Calu3 (cell line): ENCODE measurements at regions of chr3 and their contacts with region 1.

Region 1: DNA sequence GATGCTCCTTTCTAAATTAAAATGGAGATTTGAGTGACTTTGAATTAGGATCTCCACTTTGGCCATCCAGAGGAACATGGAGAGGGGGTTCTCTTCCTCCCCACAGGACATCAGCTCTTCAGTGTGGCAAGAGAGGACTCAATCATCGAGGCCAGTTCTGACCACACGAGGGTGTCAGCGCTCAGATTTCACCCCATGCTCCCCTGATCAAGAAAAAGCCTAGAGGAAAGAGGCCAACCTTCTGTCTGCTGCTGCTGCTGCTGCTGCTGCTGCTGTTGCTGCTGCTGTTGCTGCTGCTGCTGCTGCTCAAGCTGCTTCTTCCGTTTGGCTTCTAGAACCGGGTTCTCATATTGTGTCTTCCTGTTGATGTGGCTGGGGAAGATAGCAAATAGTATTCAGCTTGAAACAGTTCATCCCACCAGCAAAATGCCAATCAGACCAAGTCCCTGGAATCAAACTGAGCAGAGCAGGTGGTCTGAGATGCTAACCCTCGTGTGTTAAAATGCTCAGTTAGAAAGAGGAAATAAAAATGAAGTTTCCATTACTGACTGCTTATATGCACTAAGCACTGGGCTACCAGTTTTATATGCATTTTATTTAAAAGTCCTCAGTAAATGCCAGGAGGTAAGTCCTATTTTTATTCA is 599.0 kb downstream of the MAGI1 start:
- DNase-seq: peak; percentile 59
- H3K4me3 Mint-ChIP-seq: no peak overlapping the region
- H3K27ac Mint-ChIP-seq: no peak overlapping the region
- H3K4me1 Mint-ChIP-seq: no peaks in the 10 kb centered on the region
- H3K27me3 Mint-ChIP-seq: no peaks in the 10 kb centered on the region
- CTCF ChIP-seq: peak; percentile 44

Region 2: DNA sequence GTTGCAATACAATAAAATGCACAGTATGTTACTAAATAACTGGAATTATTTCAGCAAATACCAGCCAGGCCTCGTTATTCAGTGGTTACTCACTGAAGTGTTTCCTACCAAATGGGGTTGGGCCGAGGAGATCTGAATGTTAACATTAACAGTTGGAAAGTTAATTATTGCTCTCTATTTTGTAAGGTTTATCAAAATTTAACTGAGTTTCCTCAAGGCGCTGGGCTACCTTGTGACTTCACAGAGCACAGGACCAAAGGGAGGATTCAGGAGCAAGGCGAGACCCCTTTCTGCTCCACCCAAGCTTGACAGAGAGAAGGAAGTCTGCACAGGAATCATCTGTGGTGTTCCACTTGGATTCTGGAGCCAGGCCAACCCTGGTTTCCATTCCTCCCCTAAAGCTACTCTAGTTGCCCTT is 773.6 kb before region 1 on chr3:
- CTCF ChIA-PET with region 1: no interaction called
- intact Hi-C with region 1: loop called (anchors 5 kb)
- DNase-seq: peak; percentile 67
- H3K4me3 Mint-ChIP-seq: no peak overlapping the region
- H3K27ac Mint-ChIP-seq: peak overlapping the region; percentile 92
- H3K4me1 Mint-ChIP-seq: peaks cover 63% of the 10 kb centered on the region
- H3K27me3 Mint-ChIP-seq: no peaks in the 10 kb centered on the region
- CTCF ChIP-seq: no peak

Region 3: DNA sequence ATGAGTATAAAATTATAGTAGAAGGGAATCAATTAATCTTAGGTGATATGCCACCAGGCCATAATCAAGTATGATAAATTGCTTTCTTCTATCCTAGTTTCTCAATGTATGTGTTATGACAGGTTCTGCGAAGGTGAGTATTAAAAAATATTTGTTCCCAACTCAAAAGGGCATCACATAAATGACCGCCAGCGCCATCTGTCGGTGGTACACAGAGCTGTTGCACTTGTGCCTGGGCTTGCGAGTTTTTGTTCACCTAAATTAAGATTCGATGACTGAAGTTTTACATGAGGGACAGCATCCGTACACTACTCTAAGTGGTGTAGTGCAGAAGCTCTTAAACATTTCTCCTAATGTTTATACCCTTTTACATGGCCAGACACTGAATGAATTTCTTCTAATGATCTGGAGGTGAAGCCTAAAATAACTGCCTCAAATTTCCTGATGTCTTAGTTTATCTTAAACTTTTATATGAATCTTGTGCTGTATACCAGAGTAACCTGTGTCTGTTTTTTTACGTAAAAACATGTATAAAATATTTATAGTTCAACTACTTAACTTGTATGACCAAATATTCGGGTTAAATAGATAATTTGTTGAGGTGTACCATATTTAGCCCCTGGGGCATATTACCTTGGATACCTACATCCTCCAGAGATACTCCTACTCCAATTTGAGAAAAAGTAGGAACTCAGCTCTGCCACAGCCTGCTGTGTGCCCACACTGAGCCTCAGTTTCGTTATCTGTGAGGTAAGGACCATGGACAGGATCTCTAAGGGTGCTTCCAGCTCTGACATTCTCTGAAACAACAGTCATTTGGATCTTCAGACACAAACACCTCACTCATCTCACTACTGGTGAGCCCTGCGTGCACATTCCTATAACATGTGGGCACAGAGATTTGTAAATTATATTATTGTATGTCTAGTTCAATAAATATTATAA is 233.4 kb after region 1 on chr3:
- CTCF ChIA-PET with region 1: interaction called, 10 read pairs
- intact Hi-C with region 1: loop called (anchors 2 kb)
- DNase-seq: peak; percentile 64
- H3K4me3 Mint-ChIP-seq: no peak overlapping the region
- H3K27ac Mint-ChIP-seq: no peak overlapping the region
- H3K4me1 Mint-ChIP-seq: peaks cover 15% of the 10 kb centered on the region
- H3K27me3 Mint-ChIP-seq: no peaks in the 10 kb centered on the region
- CTCF ChIP-seq: peak; percentile 63

Region 4: DNA sequence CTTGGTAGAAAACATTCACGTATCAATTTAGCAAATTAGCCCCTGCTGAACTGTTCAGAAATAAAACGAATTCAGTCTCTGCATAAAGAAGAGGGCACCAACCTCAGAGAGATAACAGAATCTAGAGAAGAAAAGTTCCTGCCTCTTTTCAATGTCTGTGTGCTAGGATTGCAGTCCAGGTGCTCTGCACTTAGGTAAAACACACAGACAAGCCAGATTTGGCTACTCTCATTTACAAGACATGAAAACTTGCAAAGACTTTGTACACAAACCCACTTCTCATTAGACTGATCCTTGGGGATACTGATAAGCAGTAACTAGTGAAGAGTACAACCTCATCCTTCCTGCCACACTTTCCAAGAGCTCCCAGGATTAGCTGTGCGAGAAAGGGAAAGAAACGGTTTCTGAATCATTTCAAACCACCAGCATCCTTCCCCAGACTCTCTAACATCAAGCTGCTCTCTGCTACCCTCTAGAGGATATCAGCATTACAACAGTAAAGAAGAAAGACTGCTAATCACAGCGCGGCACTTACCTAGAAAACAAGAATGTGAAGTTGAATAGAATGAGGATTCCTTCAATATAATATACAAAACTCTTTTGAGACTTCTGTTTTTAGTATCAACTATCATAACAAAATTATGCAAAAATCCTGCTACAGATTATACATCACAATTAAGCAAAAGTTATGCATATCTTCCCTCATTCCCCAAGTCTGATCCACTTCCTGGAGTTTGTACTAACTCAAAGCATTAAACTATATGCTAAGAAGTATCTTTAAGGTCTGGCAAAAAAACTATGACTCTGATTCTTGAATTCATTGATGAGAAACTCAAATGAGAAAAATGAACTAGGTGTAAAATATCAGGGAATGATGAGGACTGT is 292.5 kb after region 1 on chr3:
- CTCF ChIA-PET with region 1: interaction called, 8 read pairs
- intact Hi-C with region 1: loop called (anchors 5 kb)
- DNase-seq: peak; percentile 30
- H3K4me3 Mint-ChIP-seq: no peak overlapping the region
- H3K27ac Mint-ChIP-seq: no peak overlapping the region
- H3K4me1 Mint-ChIP-seq: peaks cover 9% of the 10 kb centered on the region
- H3K27me3 Mint-ChIP-seq: no peaks in the 10 kb centered on the region
- CTCF ChIP-seq: peak; percentile 36

Region 5: DNA sequence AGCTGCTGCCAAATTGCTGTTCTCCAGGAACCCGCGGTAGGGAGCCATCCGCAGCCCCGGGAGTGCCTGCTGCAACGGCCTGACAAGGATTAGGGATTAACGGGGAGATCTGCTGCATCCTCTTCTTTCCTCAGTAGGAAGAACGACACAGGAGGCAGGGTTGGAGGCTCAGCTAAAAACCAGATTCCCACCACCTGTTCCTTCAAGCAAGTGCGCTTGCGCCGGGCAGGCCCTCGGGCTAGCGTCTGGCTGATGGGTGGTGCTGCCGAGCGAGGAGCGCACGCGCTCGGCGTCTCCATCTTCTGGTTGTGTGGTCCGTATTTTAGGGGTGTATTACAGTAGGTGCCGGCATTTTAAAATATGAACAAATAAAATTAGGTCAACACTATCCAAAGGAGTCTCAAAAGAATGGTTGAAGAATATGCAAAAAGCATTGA is 755.6 kb after region 1 on chr3:
- CTCF ChIA-PET with region 1: no interaction called
- intact Hi-C with region 1: loop called (anchors 5 kb)
- DNase-seq: peak; percentile 77
- H3K4me3 Mint-ChIP-seq: peak overlapping the region; percentile 66
- H3K27ac Mint-ChIP-seq: no peak overlapping the region
- H3K4me1 Mint-ChIP-seq: no peaks in the 10 kb centered on the region
- H3K27me3 Mint-ChIP-seq: no peaks in the 10 kb centered on the region
- CTCF ChIP-seq: no peak